ENCODE measurements at regions of chrX and their contacts with region 1.

Region 1: DNA sequence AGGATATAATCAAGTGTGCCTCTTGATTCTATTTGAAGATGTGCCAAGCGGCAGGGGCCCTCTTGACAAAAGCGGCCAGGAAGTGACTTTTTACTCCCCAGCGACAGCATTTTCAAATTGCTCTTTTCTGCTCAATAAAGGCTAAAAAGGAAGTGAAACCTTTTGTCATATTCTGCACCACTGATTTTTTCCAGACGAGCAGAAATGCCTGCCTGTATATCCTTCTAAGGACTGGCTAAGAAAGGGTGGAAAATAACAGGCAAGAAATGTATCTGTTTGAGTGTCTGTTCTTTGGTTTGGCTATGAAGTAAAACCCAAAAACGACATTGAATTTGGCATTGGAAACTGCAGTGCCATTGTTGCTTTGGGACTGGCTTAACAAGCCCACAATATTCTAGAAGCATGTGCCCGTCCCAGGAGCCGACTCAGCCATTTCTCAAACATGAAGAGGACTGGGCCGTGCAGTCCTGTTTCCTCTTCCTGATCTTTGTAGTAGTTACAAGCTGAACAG is 25.4 kb downstream of the TMSB4X start:
- DNase-seq: peak; percentile 58
- ATAC-seq: peak; percentile 59
- H3K4me3 Mint-ChIP-seq: peak overlapping the region; percentile 68
- H3K27ac Mint-ChIP-seq: peak overlapping the region; percentile 96
- H3K4me1 Mint-ChIP-seq: peaks cover 66% of the 10 kb centered on the region
- H3K27me3 Mint-ChIP-seq: no peaks in the 10 kb centered on the region

Region 2: DNA sequence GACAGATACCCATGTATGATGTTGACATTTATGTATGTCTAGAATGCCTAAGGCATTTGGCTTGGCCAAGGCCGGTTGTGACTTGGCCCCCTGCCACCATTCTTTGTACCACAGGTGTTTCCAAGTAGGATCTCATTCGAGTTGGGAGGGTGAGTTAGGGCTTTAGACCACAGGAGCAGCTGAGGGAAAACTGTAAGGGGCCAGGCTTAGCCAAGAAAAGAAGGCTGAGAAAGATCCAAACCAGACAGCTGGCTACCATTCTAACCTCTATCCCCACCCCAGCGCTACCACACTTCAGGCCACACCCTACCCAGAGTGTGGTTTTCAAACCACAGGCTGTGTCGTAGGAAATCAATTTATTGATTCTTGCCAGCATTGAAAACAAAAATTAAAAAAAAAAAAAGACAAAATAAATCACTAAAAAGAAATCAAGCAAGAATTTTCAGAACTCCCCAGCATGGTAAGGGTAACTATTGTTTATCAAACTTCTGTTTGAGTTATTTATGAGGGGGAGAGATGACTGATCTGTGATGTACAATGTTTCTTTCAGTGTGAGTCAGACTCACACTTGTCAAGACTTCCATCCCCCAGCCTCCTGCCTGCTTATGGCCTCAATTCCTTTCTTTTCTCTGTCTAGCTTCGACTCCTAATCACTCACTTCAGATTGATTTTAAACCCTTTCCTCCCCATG is 15.6 kb before region 1 on chrX:
- CTCF ChIA-PET with region 1: interaction called, 7 read pairs
- POLR2A ChIA-PET with region 1: interaction called, 211 read pairs
- DNase-seq: peak; percentile 70
- ATAC-seq: peak; percentile 74
- H3K4me3 Mint-ChIP-seq: peak overlapping the region; percentile 52
- H3K27ac Mint-ChIP-seq: peak overlapping the region; percentile 97
- H3K4me1 Mint-ChIP-seq: peaks cover 70% of the 10 kb centered on the region
- H3K27me3 Mint-ChIP-seq: no peaks in the 10 kb centered on the region

Region 3: DNA sequence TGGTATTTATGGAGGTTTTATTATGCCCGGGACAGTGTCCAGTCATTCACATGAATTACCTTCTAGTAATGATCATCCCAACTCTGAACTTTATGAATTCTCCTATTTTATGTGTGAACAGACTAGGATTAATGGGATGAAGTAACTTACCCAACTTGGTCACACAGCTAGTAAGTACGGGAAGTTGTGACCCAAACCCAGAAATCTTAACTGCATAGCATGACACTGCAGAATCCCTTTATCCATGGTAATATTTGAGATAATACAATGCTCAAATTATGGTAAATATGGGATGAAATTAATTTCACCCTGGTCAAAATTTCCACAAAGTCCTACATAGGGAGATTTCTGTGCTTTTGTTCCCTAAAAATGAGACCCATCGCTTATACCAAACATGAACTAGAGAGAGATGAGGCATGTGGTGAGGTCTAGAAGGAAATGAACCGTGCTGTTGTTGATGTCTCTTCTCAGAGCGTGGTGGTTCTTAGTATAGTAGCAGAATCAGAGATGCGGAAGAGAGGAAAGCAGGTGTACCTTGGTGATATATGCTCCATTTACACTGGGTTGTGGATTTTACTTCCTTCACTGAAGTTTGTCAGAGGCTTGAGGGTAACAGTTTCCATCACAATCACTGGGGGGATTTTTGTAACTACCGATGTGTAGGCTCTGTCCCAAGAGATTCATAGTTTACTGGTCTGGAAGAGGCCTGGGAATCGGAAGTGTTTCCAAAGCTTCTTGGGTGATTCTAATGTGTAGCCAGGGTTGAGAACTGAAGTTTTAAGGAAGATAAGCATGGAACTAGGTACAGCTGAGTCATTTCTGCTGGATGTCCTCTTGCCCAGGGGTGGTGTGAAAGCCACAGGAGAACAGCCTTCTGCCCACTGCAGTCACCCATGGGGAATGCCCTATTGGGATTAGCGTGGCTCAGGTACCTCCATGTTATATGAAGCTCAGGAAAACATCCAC is 74.2 kb after region 1 on chrX:
- CTCF ChIA-PET with region 1: no interaction called
- POLR2A ChIA-PET with region 1: interaction called, 11 read pairs
- DNase-seq: no peak
- ATAC-seq: peak; percentile 72
- H3K4me3 Mint-ChIP-seq: peak overlapping the region; percentile 12
- H3K27ac Mint-ChIP-seq: peak overlapping the region; percentile 80
- H3K4me1 Mint-ChIP-seq: peaks cover 56% of the 10 kb centered on the region
- H3K27me3 Mint-ChIP-seq: no peaks in the 10 kb centered on the region

Region 4: GRCh38 chrX:13081395-13082205 is 81.2 kb after region 1 on chrX:
- CTCF ChIA-PET with region 1: interaction called, 13 read pairs
- POLR2A ChIA-PET with region 1: interaction called, 37 read pairs
- DNase-seq: no peak
- ATAC-seq: peak; percentile 27
- H3K4me3 Mint-ChIP-seq: peak overlapping the region; percentile 63
- H3K27ac Mint-ChIP-seq: peak overlapping the region; percentile 95
- H3K4me1 Mint-ChIP-seq: peaks cover 90% of the 10 kb centered on the region
- H3K27me3 Mint-ChIP-seq: no peaks in the 10 kb centered on the region